Mucosa of descending colon (tissue), 3 donors: ENCODE measurements at regions of chr1 and their contacts with region 1.

Region 1: DNA sequence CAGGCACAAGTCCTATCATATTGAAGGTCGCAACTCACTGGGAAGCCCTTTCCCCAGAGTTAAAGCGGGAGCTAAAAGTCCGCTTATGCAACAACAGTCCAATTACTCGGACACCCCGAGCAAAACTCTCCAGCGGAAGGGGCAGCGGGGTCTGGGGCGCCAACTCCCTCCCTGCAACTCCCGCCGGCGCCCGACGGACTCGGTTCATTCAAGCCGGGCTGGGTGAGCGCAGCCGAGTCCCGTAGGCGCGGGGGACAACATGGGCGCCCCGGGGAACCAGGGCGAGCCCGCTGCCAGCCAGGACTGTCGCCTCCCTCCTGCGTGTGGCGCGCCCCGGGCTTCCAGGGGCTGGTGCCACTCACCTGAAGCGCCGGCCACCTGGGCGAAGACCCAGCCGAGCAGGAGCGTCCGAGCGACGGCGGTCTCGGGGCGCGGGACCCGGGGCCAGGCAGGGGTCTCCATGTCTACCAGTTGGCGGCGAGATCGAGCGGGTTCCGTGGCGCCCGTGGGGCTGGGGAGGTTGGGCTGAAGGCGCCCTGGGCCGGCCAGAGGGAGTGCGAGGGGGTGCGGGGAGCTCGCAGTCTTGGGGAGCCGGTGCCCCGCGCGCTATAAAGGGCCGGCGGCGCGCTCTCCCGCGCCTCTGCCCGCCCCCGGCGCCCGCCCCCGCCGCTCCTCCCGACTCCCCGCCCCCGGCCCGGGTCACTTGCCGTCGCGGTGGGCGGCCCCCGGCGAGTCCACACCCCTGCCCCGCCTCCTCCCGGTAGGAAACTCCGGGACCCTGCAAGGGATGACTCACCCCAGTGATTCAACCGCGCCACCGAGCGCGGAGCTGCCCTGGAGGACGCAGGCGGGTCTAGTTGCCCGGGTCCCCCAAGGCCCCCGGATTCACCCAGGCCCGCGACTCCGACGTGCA is at the start of gene F3:
- DNase-seq: peak; percentile 93 to 96 (median 94)
- ATAC-seq: peak; percentile 97
- H3K4me3 ChIP-seq: peak within 1 kb of the TSS; percentile 71
- H3K4me1 ChIP-seq: peaks cover 3% of the 10 kb centered on the region
- CTCF ChIP-seq: no peak
- total RNA-seq, gene F3: 24.4 to 44.3 (median 33.2) TPM

Region 2: GRCh38 chr1:94602316-94602715 is 60.9 kb after region 1 on chr1:
- intact Hi-C with region 1: loop called in 1 of 2 experiments (anchors 10 kb)
- DNase-seq: peak in 2 of 3 donors; percentile 40 to 59
- ATAC-seq: peak; percentile 37
- H3K4me3 ChIP-seq: no peak overlapping the region
- H3K4me1 ChIP-seq: peaks cover 26% of the 10 kb centered on the region
- CTCF ChIP-seq: no peak

Region 3: DNA sequence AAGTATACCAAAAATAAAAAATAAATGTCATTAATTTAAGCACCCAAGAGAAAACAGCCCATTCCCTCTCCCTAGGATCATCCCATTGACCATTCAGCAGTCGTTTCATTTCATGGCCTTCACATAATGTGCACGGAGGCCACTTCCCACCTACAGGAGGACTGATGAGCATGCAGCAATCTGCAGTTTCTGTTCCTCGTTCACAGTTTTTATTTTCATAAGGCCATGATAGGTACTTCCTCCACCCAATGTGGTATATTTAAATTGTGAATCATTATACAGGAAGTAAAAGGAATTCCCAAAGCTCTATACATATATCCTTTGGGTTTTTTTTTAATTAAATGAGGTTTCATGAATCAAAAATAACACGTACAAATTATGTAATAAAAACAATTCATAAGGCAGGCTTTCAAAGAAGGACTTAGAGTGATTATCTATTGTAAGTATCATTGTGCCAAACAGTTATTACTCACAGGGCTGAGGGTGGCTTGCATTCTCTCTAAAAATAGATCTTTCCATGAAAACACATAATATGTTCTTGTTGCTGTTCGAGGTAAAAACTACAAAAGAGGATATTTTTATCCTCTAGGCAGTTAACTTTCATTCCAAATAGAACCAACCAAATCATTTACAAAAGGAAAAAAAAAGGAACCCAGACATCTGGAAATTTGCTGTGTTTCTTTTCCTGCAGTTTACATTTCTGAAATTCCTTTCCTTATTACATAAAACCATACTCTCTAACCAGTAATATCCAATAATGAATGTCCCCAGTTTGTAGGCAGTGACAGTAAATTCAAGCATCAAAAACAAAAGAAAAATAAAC is 251.3 kb after region 1 on chr1:
- intact Hi-C with region 1: loop called in 1 of 2 experiments (anchors 5 kb)
- DNase-seq: no peak
- ATAC-seq: peak; percentile 97
- H3K4me3 ChIP-seq: no peak overlapping the region
- H3K4me1 ChIP-seq: no peaks in the 10 kb centered on the region
- CTCF ChIP-seq: no peak